ENCODE measurements at regions of chr5 and their contacts with region 1.

Region 1: GRCh38 chr5:62578540-62578939 is at the start of gene LRRC70:
- DNase-seq: no peak
- H3K4me3 Mint-ChIP-seq: no peak within 1 kb of the TSS
- H3K27ac Mint-ChIP-seq: peak within 1 kb of the TSS; percentile 53
- H3K4me1 Mint-ChIP-seq: peaks cover 24% of the 10 kb centered on the region
- H3K27me3 Mint-ChIP-seq: no peaks in the 10 kb centered on the region
- total RNA-seq, gene LRRC70: 0.34 to 0.40 TPM

Region 2: DNA sequence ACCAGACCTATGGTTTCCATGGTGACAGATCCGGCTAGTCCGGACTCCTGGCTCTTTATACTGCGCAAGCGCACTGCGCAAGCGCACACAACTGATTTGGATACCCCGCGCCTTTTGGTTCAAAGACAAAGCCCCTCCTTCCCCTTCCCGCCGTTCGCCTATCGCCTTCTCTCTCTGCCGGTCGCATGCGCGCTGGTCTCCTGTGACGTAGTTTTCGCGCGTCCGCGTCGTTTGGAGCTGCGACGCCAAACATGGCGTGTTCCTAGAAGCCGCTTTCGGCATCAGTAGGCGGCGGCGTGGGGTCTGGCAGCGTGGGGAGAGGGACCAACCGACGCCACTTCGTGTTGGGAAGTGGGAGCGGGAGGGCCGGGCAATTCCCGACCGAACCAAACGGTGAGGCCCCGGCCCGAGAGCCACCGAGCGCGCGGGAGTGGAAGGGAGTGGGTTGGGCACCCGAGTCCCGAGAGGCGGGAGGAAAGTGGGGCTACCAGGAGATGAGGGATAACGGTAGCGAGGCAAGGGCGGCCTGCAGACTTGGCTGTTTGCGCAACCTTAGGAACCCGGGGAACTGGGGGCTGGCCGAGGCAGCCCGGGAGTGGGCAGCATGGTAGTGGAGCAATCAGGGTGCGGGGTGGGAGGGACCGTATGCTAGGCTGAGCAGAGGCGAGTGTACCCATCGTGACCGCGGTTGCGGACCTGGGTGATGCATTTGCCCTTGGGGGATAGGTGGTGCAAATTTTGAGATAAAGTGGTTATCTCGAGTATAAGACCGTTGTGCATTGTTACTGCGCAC is 165.8 kb before region 1 on chr5 and contains the start of gene IPO11:
- CTCF ChIA-PET with region 1: no interaction called
- POLR2A ChIA-PET with region 1: no interaction called
- intact Hi-C with region 1: loop called (anchors 5 kb)
- DNase-seq: peak; percentile 100
- H3K4me3 Mint-ChIP-seq: peak within 1 kb of the TSS; percentile 87
- H3K27ac Mint-ChIP-seq: peak within 1 kb of the TSS; percentile 88
- H3K4me1 Mint-ChIP-seq: peaks cover 23% of the 10 kb centered on the region
- H3K27me3 Mint-ChIP-seq: peaks cover 2% of the 10 kb centered on the region
- total RNA-seq, gene IPO11: 55.4 to 59.2 TPM

Region 3: GRCh38 chr5:62538017-62538942 is 40.3 kb before region 1 on chr5:
- CTCF ChIA-PET with region 1: no interaction called
- POLR2A ChIA-PET with region 1: no interaction called
- intact Hi-C with region 1: loop called (anchors 2 kb)
- DNase-seq: peak; percentile 27
- H3K4me3 Mint-ChIP-seq: no peak overlapping the region
- H3K27ac Mint-ChIP-seq: peak overlapping the region; percentile 80
- H3K4me1 Mint-ChIP-seq: peaks cover 17% of the 10 kb centered on the region
- H3K27me3 Mint-ChIP-seq: no peaks in the 10 kb centered on the region

Region 4: DNA sequence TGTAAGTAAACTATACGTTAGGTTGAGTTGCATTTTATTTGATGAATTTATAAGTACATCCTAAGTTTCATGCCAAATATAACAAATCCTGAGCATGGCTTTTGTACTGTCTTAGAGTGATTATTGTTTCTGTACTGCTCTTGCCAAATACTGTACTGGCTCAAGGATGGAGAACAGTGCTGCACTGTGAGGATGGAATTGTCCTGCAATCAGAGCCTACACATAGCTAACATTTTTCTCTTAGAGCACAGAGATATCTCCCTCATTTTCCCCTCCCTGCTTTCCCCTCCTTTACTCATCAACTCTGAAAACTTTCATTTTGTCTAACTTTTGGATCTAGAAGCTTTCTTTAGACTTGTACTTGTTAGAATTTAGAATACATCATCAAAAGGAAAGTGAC is 28.3 kb after region 1 on chr5:
- CTCF ChIA-PET with region 1: no interaction called
- POLR2A ChIA-PET with region 1: no interaction called
- intact Hi-C with region 1: no loop called
- DNase-seq: no peak
- H3K4me3 Mint-ChIP-seq: no peak overlapping the region
- H3K27ac Mint-ChIP-seq: no peak overlapping the region
- H3K4me1 Mint-ChIP-seq: peaks cover 8% of the 10 kb centered on the region
- H3K27me3 Mint-ChIP-seq: no peaks in the 10 kb centered on the region